ENCODE measurements at regions of chr19 and their contacts with region 1.

Region 1: DNA sequence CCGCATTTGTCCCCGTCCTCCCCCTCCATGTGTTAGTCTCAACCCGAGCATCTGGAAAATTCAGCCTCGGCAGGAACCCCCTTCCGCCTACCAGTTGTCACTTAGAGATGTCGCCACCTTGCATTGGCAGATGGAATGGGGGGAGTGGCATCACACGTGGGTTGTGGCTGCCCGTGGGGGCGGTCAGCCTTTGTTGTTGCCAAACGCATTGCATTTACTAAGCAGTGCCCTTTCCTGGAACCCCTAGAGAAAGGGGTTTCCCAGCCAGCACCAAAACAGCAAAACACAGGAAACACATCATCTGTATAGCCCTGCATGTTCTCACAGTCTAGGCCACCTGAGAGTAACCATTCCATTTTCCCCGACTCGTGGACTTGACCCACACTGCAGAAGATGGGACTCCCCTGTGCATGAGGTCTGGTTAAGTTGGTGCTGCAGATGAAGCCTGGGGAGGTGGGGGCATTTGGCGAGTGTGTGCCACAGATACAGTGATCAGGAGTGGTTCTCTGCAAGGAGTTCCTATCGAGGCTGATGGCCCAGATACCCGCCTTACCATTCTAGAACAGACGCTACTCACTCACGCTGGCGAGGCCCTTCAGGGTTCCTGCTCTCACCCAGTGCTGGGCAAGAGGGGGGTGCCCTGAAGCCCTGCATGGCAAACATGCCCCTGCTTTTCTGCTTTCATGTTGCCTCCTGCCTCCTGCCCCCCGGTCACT is 38.3 kb downstream of the TMED1 start:
- DNase-seq: peak; percentile 92
- H3K4me3 Mint-ChIP-seq: peak overlapping the region; percentile 89
- H3K27ac Mint-ChIP-seq: peak overlapping the region; percentile 99
- H3K4me1 Mint-ChIP-seq: peaks cover 58% of the 10 kb centered on the region
- H3K27me3 Mint-ChIP-seq: no peaks in the 10 kb centered on the region

Region 2: GRCh38 chr19:10760273-10760944 is 37.3 kb before region 1 on chr19:
- intact Hi-C with region 1: loop called (anchors 1 kb)
- DNase-seq: no peak
- H3K4me3 Mint-ChIP-seq: peak overlapping the region; percentile 66
- H3K27ac Mint-ChIP-seq: peak overlapping the region; percentile 86
- H3K4me1 Mint-ChIP-seq: peaks cover 78% of the 10 kb centered on the region
- H3K27me3 Mint-ChIP-seq: no peaks in the 10 kb centered on the region

Region 3: DNA sequence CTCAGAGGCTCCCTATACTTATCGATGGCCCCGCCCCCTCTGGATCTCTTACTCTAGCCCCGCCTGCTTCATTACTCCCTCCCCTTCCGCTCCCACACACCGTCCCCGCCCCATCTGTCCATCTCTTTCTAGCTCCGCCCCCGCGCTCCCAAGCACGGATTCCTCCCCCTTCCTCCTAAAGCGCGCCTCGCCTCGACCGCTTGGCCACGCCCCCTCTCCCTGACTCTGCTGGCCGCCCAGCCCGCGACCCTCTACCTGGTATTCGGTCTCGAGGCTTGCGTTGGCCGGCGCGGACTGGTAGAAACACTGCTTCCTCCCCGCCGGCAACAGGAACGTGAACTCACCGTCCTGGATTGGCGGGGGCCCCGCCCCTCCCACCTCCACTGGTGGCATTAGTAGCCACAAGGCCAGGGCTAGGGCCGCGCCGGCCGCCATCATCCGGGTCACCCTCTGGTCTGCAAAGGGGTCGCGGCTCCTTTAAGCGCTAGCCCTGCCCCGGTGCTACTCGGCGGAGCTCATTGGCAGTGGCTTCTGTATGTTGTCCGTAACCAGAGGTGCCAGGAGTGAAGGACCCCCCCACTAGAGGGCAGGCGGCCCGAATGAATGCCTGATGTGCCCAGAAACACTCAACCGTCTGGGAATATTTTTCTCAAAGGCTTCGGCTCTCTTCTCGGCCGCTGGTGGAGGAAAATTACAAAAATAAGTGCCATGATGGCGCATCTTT is 38.2 kb after region 1 on chr19 and contains the start of gene TMED1:
- intact Hi-C with region 1: loop called (anchors 1 kb)
- DNase-seq: peak; percentile 93
- H3K4me3 Mint-ChIP-seq: peak within 1 kb of the TSS; percentile 92
- H3K27ac Mint-ChIP-seq: peak within 1 kb of the TSS; percentile 99
- H3K4me1 Mint-ChIP-seq: peaks cover 15% of the 10 kb centered on the region
- H3K27me3 Mint-ChIP-seq: peaks cover 4% of the 10 kb centered on the region
- total RNA-seq, gene TMED1: 19.8 and 21.0 TPM in 2 replicates

Region 4: DNA sequence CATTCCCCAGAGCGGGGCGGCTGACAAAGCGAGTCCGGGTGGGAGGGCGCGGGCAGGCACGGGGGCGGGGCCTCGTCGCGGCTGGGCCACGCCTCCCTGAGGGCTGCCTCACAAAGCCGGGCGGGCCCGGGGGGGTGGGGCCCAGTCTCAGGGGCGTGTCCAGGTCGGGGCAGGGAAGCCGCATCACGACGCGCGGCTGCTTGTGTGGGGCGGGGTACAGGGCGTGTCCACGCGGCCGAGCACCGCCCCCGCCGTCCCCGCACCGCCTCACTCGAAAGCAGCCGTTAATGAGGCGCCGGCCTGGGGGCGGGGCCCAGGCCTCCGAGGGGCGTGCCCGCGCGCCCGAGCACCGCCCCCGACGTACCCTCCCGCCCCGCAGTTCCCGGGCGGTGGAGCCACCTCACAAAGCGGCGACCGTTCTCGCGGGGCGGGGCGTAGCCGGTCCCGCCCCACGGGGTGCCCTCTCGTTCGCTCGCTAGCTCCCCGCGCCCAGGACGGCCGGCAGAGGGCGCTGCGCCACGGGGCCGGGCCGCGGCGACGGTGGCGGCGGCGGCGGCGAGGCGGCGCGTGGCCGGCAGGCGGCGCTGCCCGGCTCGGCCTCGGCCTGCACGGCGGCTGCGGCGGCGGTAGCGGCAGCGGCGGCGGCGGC is 73.4 kb after region 1 on chr19 and contains the start of gene CARM1:
- intact Hi-C with region 1: loop called (anchors 1 kb)
- DNase-seq: peak; percentile 98
- H3K4me3 Mint-ChIP-seq: peak within 1 kb of the TSS; percentile 88
- H3K27ac Mint-ChIP-seq: peak within 1 kb of the TSS; percentile 93
- H3K4me1 Mint-ChIP-seq: peaks cover 37% of the 10 kb centered on the region
- H3K27me3 Mint-ChIP-seq: no peaks in the 10 kb centered on the region
- total RNA-seq, gene CARM1: 85.9 and 88.0 TPM in 2 replicates

Measured in activated T-helper 1 cell treated with anti-CD3 and anti-CD28 coated beads, Interleukin-12 subunit alpha, Interleukin-12 subunit beta, Interleukin-2, Interleukin-4 antibody, amounts not matched to agents 30 ng/mL and 10 ng/mL and 1 ng/mL, durations not matched to agents 14 hours and 24 hours and 36 hours (primary cell).